PC-3 (cell line): ENCODE measurements at regions of chr12 and their contacts with region 1.

Region 1: GRCh38 chr12:52036587-52037171 is 14.6 kb upstream of the NR4A1 start:
- DNase-seq: peak; percentile 81
- ATAC-seq: peak; percentile 57
- H3K4me3 ChIP-seq: peak overlapping the region; percentile 59
- H3K27ac ChIP-seq: peak overlapping the region; percentile 61
- H3K4me1 ChIP-seq: peaks cover 29% of the 10 kb centered on the region
- H3K27me3 ChIP-seq: no peaks in the 10 kb centered on the region
- CTCF ChIP-seq: no peak

Region 2: GRCh38 chr12:51823875-51824565 is 212.7 kb before region 1 on chr12:
- CTCF ChIA-PET with region 1: no interaction called
- POLR2A ChIA-PET with region 1: no interaction called
- intact Hi-C with region 1: no loop called
- DNase-seq: peak; percentile 83
- ATAC-seq: peak; percentile 33
- H3K4me3 ChIP-seq: no peak overlapping the region
- H3K27ac ChIP-seq: no peak overlapping the region
- H3K4me1 ChIP-seq: peaks cover 30% of the 10 kb centered on the region
- H3K27me3 ChIP-seq: no peaks in the 10 kb centered on the region
- CTCF ChIP-seq: peak; percentile 80

Region 3: GRCh38 chr12:51886021-51886322 is 150.7 kb before region 1 on chr12:
- CTCF ChIA-PET with region 1: no interaction called
- POLR2A ChIA-PET with region 1: no interaction called
- intact Hi-C with region 1: no loop called
- DNase-seq: peak; percentile 83
- ATAC-seq: peak; percentile 95
- H3K4me3 ChIP-seq: no peak overlapping the region
- H3K27ac ChIP-seq: peak overlapping the region; percentile 34
- H3K4me1 ChIP-seq: peaks cover 7% of the 10 kb centered on the region; the same call in 1 of the 2 replicates
- H3K27me3 ChIP-seq: no peaks in the 10 kb centered on the region
- CTCF ChIP-seq: no peak

Region 4: GRCh38 chr12:52050761-52051541 is 14.3 kb after region 1 on chr12 and contains the start of gene NR4A1:
- CTCF ChIA-PET with region 1: interaction called, 3 read pairs
- POLR2A ChIA-PET with region 1: interaction called, 12 read pairs
- intact Hi-C with region 1: loop called (anchors 1 kb)
- DNase-seq: peak; percentile 90
- ATAC-seq: peak; percentile 80
- H3K4me3 ChIP-seq: peak within 1 kb of the TSS; percentile 79
- H3K27ac ChIP-seq: peak within 1 kb of the TSS; percentile 93
- H3K4me1 ChIP-seq: peaks cover 23% of the 10 kb centered on the region
- H3K27me3 ChIP-seq: no peaks in the 10 kb centered on the region
- CTCF ChIP-seq: peak; percentile 25; the same call in 1 of the 2 replicates
- total RNA-seq, gene NR4A1: 90.7 and 110 TPM in 2 replicates